Thyroid gland (tissue), 4 donors: ENCODE measurements at regions of chr13 and their contacts with region 1.

Region 1: DNA sequence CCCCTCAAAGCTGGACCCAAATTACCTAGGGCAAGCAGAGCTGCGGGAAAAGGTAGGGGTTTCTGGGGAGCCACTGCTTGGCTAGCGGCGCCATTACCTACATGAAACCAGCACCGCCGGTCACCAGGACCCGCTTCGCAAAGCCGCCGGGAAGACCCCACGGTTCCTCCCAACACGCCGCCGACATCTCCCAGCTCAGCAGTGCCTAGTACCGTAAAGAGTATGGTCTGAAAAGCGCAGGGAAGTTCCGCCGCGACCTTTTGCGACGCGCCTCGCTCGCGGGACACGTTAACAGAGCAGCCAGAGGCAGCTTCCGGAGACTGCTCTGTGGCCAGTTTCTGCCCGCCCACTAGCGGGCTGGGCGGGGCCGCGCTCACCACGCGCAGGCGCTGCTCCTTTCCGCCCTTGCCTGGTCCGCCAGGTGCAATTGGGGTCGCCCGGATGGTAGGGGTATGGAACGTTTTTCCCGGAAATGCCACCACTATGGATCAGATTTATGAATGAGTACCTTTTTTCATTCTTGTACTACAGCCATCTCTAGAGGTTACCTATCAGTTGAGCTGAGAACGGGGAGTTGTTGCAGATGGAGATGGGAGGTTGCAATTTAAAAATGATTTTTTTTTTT is at the start of gene TGDS:
- DNase-seq: peak; percentile 93 to 95
- H3K4me3 ChIP-seq: peak within 1 kb of the TSS; percentile 55 to 91 (median 67)
- H3K27ac ChIP-seq: peak within 1 kb of the TSS in 2 of 3 donors; percentile 57 to 78
- H3K4me1 ChIP-seq: peaks cover 18 to 19% of the 10 kb centered on the region in 2 donors
- H3K27me3 ChIP-seq: no peaks in the 10 kb centered on the region
- CTCF ChIP-seq: peak in 1 of 6 experiments; percentile 36
- POLR2A ChIP-seq: peak in 1 of 2 donors; percentile 90
- total RNA-seq, gene TGDS: 15.8 to 25.2 (median 20.4) TPM

Region 2: DNA sequence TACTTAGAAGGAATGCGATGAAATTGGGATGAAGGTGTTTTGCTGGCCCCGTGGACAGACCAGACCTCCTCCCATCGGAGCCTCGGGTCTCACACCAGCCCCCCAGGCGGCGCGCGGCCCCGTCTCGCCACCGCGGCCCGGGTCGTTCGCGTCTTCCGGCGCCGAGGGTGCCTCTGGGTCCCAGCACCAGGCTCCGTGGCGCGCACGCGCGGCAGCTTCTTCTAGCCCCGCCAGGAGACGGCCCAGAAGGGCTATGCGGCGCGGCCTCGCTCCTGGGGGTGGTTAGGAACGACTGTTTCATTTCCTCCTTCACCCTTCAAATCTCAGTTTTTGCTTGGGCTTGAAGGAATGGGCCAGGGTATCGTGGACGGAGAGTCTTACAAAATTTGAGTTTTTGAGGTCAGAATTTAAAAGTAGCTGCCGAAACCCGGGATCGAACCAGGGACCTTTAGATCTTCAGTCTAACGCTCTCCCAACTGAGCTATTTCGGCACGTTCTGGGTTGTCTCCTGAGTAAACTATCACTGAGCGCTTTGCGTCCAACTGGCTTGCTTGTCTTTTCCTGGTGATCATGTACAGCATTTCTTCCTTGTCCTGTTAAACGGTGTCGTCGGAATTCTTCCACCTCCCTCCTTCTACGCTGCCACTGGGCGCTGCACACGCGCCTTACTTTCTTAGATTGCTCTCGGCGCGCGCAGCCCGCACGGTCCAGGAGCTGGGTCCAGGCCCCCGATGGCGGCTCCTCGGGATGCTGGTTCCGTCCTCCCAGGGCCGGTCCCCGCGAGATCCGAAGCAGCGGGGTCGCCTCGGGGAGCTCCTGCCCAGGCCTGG is 46.6 kb before region 1 on chr13:
- intact Hi-C with region 1: loop called (anchors 10 kb)
- DNase-seq: peak; percentile 89
- H3K4me3 ChIP-seq: peak overlapping the region; percentile 16 to 53 (median 41)
- H3K27ac ChIP-seq: peak overlapping the region; percentile 88 to 95 (median 94)
- H3K4me1 ChIP-seq: peaks cover 6 to 8% of the 10 kb centered on the region in 2 donors
- H3K27me3 ChIP-seq: no peaks in the 10 kb centered on the region
- CTCF ChIP-seq: peak in 1 of 6 experiments; percentile 12
- POLR2A ChIP-seq: peak in 1 of 2 donors; percentile 61